ENCODE measurements at regions of chr6 and their contacts with region 1.

Region 1: DNA sequence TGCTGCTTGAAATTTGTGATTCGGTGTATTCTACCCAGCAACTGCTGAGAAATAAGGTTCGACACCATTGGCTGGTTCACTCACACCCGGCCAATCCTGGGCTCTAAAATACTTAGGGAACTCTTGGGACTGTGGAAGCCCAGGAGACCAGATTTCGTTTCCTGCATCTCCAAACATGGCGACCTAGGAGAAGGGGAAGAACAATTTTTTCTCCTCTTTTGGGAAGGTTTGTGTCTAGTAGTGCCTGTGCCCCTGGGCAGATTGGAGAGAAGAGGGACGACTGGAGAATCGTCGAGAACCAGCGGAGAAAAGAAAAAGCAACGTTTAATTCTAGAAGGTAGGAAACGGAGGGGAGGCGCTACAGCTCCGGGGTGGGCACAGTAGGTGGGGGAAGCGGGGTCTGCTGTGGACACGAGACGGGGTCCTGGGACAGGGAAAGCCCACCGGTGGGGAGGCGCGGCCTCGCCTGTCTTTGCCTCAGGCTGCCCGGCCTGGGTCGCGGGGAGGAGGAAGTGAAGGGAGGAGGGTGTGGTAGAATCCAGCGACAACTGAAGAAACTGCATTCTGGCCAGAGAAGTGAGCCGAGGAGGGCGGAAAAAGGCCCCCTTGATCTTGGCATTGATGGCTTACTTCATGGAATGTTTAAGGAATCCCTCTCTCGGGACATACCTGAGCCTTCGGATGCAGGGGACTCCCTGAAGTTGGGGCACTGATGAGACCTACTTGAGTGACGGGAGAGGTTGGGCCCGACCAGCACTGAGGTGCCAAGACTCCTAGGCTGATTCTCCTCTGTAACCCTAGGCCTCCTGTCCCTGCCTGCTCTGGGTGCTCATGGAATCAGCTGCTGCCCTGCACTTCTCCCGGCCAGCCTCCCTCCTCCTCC is at the start of gene BTN2A1:
- DNase-seq: peak; percentile 94
- H3K4me3 Mint-ChIP-seq: peak within 1 kb of the TSS; percentile 85
- H3K27ac Mint-ChIP-seq: peak within 1 kb of the TSS; percentile 98
- H3K4me1 Mint-ChIP-seq: peaks cover 20% of the 10 kb centered on the region
- H3K27me3 Mint-ChIP-seq: no peaks in the 10 kb centered on the region
- CTCF ChIP-seq: no peak
- total RNA-seq, gene BTN2A1: 14.6 and 16.9 TPM in 2 replicates

Region 2: DNA sequence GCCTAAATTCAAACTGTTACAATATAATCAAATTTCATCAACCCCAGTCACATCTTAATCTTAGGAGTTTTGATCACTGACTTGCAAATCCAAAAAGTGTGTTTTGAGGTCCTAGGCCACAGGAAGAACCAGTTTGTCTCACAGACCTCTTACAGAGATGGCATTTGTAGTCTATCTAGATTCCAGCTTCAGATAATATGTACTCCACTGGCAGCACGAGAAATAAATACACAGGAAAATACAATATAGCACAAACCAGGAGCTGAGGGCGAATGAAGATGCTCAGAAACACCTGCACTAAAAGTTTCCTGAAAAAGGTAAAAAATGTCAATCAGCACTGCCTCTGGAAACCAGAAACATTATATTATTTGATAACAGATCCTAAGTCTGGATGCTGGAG is 18.4 kb before region 1 on chr6:
- CTCF ChIA-PET with region 1: interaction called, 4 read pairs
- POLR2A ChIA-PET with region 1: interaction called, 4 read pairs
- intact Hi-C with region 1: loop called (anchors 2 kb)
- DNase-seq: no peak
- H3K4me3 Mint-ChIP-seq: peak overlapping the region; percentile 85
- H3K27ac Mint-ChIP-seq: peak overlapping the region; percentile 89
- H3K4me1 Mint-ChIP-seq: peaks cover 15% of the 10 kb centered on the region
- H3K27me3 Mint-ChIP-seq: no peaks in the 10 kb centered on the region
- CTCF ChIP-seq: no peak

Region 3: DNA sequence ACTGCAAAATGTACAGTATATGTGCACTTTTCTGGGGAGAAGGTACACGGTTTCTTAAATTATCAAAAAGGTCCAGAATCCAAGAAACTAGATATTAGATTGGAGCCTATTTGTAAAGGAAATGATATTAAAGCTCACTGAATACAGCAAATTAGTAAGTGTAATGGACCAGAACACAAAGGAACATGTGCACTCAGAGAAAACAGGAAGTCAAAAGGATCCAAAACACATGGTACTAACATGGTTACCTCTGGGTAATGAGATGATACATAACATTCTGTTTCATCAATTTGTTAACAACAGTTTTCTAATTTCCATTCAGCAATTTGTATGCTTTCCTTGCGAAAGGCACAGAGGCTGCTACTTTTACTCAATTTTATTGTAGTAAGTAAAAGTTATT is 182.8 kb after region 1 on chr6:
- CTCF ChIA-PET with region 1: no interaction called
- POLR2A ChIA-PET with region 1: no interaction called
- intact Hi-C with region 1: no loop called
- DNase-seq: no peak
- H3K4me3 Mint-ChIP-seq: no peak overlapping the region
- H3K27ac Mint-ChIP-seq: no peak overlapping the region
- H3K4me1 Mint-ChIP-seq: no peaks in the 10 kb centered on the region
- H3K27me3 Mint-ChIP-seq: no peaks in the 10 kb centered on the region
- CTCF ChIP-seq: no peak